Calu3 (cell line): ENCODE measurements at regions of chr12 and their contacts with region 1.

Region 1: GRCh38 chr12:63843721-63844390 is 644 bp upstream of the SRGAP1 start:
- DNase-seq: peak; percentile 96
- H3K4me3 Mint-ChIP-seq: peak overlapping the region; percentile 97
- H3K27ac Mint-ChIP-seq: peak overlapping the region; percentile 93
- H3K4me1 Mint-ChIP-seq: peaks cover 19% of the 10 kb centered on the region
- H3K27me3 Mint-ChIP-seq: no peaks in the 10 kb centered on the region
- CTCF ChIP-seq: peak; percentile 96

Region 2: DNA sequence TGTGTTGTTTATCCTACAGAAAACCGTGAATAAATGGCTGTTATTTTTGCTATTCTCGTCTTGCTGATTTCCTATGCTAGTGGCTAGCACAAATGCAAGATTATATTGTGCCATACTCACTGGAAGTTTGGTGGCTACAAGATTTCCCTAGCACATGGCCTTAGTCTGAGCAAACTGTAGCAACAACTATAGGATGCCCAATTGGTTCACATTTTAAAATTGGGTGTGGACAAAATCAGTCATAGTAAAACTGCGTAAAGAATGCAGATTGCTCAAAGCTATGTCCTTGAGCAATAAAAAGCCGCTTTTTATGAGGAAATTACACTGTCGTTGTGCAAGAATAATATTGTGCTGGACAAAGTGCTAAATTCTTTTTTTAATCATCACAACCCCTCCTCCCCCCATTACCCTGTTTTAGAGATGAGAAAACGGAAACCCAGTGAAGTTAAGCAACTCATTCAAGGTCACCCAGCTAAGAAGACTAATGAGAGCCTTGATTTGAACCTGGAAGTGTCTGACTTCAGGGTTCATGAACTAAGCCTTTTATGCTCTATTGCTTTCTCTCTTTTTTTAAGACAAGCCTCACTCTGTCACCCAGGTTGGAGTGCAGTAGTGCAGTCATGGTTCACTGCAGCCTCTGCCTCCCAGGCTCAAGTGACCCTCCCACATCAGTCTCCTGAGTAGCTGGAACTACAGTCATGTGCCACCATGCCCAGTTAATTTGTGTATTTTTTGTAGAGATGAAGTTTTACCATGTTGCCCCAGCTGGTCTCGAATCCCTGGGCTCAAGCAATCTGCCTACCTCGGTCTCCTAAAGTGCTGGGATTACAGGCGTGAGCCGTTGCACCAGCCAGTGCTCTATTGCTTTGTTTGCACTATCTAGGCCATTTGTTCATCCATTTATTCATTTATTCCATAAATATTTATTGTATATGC is 74.3 kb after region 1 on chr12:
- CTCF ChIA-PET with region 1: interaction called, 14 read pairs
- intact Hi-C with region 1: loop called (anchors 1 kb)
- DNase-seq: peak; percentile 63
- H3K4me3 Mint-ChIP-seq: peak overlapping the region; percentile 33
- H3K27ac Mint-ChIP-seq: peak overlapping the region; percentile 89
- H3K4me1 Mint-ChIP-seq: peaks cover 87% of the 10 kb centered on the region
- H3K27me3 Mint-ChIP-seq: no peaks in the 10 kb centered on the region
- CTCF ChIP-seq: no peak

Region 3: DNA sequence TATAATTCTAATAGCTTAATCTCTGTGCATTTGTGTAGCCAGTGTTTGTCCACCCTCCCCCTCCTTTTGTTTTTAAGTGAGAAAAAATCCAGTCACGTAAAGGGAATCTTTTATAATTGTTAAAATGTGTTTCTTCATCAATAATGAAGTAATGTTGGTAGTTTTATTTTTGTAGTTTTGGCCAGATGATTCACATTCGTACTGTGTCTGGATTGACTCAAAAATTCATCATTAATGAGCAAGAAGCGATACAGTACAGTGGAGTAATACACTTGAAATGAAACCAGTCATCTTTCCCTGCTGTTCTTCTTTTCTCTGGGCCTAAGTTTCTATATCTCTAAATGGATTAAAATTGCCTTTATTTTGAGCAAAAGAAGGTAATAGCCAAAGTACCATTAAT is 87.1 kb after region 1 on chr12:
- CTCF ChIA-PET with region 1: no interaction called
- intact Hi-C with region 1: no loop called
- DNase-seq: no peak
- H3K4me3 Mint-ChIP-seq: no peak overlapping the region
- H3K27ac Mint-ChIP-seq: no peak overlapping the region
- H3K4me1 Mint-ChIP-seq: peaks cover 21% of the 10 kb centered on the region
- H3K27me3 Mint-ChIP-seq: no peaks in the 10 kb centered on the region
- CTCF ChIP-seq: no peak

Region 4: DNA sequence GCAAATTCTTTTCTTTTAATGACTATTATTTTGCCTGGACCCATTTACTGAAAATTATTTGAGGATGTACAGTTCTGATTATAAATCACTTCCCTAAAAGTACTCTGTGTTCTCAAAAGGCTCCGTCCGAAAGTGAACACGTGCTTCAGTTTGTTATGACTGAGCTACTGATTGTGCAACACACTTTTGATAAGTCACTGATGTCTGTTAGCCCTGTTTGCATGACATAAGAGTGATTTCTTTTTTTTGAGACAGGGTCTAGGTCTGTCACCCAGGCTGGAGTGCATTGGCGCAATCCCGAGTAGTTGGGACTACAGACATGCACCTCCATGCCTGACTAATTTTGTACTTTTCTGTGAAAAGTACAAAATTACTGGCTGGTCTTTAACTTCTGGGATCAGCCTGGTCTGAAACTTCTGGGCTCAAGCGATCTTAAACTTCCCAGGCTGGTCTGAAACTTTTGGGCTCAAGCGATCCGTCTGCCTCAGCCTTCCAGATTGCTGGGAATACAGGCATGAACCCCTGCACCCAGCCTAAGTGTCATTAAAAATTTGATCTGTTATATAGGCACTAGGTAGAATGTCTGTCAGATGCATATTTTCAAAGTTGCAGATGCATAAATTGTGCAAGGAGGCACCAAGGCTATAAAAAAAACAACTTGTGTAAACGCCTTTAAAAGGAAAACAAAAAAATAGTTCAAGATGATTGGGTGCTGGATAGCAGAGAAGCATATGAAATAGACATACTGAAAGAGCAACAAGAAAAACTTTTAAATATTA is 112.2 kb after region 1 on chr12:
- CTCF ChIA-PET with region 1: no interaction called
- intact Hi-C with region 1: no loop called
- DNase-seq: no peak
- H3K4me3 Mint-ChIP-seq: no peak overlapping the region
- H3K27ac Mint-ChIP-seq: no peak overlapping the region
- H3K4me1 Mint-ChIP-seq: no peaks in the 10 kb centered on the region
- H3K27me3 Mint-ChIP-seq: no peaks in the 10 kb centered on the region
- CTCF ChIP-seq: no peak

Region 5: DNA sequence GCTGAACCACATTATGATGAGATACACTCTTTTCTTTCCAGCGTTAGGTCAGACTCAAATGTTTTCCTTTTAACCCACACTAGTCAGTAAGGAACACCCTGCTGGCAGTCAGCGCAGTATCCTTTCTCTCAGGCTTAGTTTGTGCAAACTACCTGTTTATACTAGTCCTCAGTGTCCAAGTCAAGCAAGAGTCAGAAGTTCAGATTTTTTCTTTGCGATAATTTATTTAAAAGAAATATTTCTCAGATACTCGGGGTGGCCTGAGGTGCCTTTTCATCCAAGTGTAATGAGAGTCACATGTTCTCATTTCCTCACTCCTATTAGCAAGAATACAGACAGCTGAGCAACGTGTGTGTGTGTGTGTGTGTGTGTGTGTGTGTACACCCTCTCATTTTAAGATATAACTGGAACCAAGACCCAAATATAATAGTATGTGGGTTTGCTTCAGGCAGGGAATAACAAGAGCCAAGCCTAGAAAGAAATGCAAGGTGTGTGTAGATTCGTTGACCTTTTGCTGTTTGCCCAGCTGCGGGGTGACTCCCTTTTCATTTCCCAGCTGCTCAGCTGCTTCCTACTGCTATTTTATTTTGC is 195.5 kb after region 1 on chr12:
- CTCF ChIA-PET with region 1: no interaction called
- intact Hi-C with region 1: loop called (anchors 2 kb)
- DNase-seq: peak; percentile 5
- H3K4me3 Mint-ChIP-seq: no peak overlapping the region
- H3K27ac Mint-ChIP-seq: peak overlapping the region; percentile 57
- H3K4me1 Mint-ChIP-seq: peaks cover 7% of the 10 kb centered on the region
- H3K27me3 Mint-ChIP-seq: no peaks in the 10 kb centered on the region
- CTCF ChIP-seq: no peak

Region 6: GRCh38 chr12:64181504-64182291 is 337.8 kb after region 1 on chr12:
- CTCF ChIA-PET with region 1: interaction called, 18 read pairs
- intact Hi-C with region 1: loop called (anchors 1 kb)
- DNase-seq: peak; percentile 43
- H3K4me3 Mint-ChIP-seq: no peak overlapping the region
- H3K27ac Mint-ChIP-seq: no peak overlapping the region
- H3K4me1 Mint-ChIP-seq: peaks cover 37% of the 10 kb centered on the region
- H3K27me3 Mint-ChIP-seq: no peaks in the 10 kb centered on the region
- CTCF ChIP-seq: peak; percentile 21